ENCODE measurements at regions of chr3 and their contacts with region 1.

Region 1: GRCh38 chr3:133443649-133444422 is 44.0 kb downstream of the BFSP2 start:
- DNase-seq: peak; percentile 91
- ATAC-seq: peak; percentile 90
- H3K4me3 ChIP-seq: no peak overlapping the region
- H3K27ac ChIP-seq: peak overlapping the region; percentile 66
- H3K4me1 ChIP-seq: peaks cover 15% of the 10 kb centered on the region
- H3K27me3 ChIP-seq: no peaks in the 10 kb centered on the region
- CTCF ChIP-seq: peak; percentile 26; the same call in 1 of the 2 replicates

Region 2: GRCh38 chr3:133457465-133458067 is 13.7 kb after region 1 on chr3:
- CTCF ChIA-PET with region 1: no interaction called
- POLR2A ChIA-PET with region 1: no interaction called
- intact Hi-C with region 1: loop called (anchors 1 kb)
- DNase-seq: peak; percentile 33
- ATAC-seq: no peak
- H3K4me3 ChIP-seq: no peak overlapping the region
- H3K27ac ChIP-seq: no peak overlapping the region
- H3K4me1 ChIP-seq: peaks cover 20% of the 10 kb centered on the region
- H3K27me3 ChIP-seq: no peaks in the 10 kb centered on the region
- CTCF ChIP-seq: peak; percentile 54; the same call in 1 of the 2 replicates

Region 3: DNA sequence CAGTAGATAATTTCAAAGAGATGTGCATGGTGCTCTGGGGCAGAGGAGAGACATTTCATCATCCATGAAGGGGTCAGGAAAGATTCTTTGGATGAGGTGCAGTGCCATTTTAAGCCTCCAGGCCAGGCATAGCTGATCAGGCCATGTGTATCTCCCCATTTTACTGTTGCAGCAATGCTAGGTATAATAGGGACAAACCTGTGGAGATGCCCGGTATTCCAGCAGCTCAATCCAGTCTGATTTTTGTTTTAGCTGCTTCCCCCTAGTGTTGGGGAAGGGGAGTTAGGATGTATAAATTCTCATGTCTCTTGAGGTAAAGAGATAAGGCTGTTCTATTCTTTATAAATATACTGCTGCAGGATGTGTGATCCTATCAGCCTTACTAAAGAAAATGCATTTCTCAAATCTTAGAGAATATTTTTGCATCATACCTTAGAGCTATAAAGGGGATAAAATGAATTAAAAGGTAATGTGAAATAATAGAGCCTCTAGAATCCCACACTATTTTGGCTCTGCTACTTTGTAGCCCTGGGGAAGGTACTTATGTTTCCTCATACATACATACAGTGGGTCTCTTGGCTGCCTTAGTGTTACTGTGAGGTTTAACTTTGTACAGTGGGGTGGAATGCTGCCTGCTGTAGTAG is 134.8 kb after region 1 on chr3:
- CTCF ChIA-PET with region 1: no interaction called
- POLR2A ChIA-PET with region 1: no interaction called
- intact Hi-C with region 1: loop called (anchors 1 kb)
- DNase-seq: peak; percentile 63
- ATAC-seq: peak; percentile 53
- H3K4me3 ChIP-seq: peak overlapping the region; percentile 19; the same call in 1 of the 2 replicates
- H3K27ac ChIP-seq: no peak overlapping the region
- H3K4me1 ChIP-seq: peaks cover 19% of the 10 kb centered on the region
- H3K27me3 ChIP-seq: no peaks in the 10 kb centered on the region
- CTCF ChIP-seq: peak; percentile 70

Region 4: DNA sequence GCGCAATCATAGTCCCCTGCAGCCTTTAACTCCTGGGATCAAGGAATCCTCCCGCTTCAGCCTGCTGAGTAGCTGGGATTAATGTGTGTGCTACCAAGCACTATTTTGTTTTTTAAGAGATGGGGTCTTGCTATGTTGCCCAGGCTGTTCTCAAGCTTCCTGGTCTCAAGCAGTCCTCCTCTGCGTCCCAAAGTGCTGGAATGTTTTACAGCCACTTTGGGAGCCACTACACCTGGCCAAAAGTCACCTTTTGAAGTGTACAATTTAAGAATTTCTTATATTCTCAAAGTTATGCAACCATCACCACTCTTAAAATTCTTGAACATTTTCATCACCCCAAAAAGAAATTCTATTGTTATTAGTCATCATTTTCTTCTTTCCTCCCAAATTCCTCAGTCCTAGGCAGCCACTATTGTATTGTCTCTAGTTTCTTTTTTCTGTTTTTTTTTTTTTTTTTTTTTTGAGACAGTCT is 147.5 kb after region 1 on chr3:
- CTCF ChIA-PET with region 1: no interaction called
- POLR2A ChIA-PET with region 1: no interaction called
- intact Hi-C with region 1: loop called (anchors 5 kb)
- DNase-seq: peak; percentile 77
- ATAC-seq: peak; percentile 58
- H3K4me3 ChIP-seq: no peak overlapping the region
- H3K27ac ChIP-seq: no peak overlapping the region
- H3K4me1 ChIP-seq: peaks cover 35% of the 10 kb centered on the region
- H3K27me3 ChIP-seq: no peaks in the 10 kb centered on the region
- CTCF ChIP-seq: no peak

Region 5: GRCh38 chr3:133805527-133806475 is 362.0 kb after region 1 on chr3 and contains the start of gene SRPRB:
- CTCF ChIA-PET with region 1: no interaction called
- POLR2A ChIA-PET with region 1: no interaction called
- intact Hi-C with region 1: loop called (anchors 2 kb)
- DNase-seq: peak; percentile 93
- ATAC-seq: peak; percentile 98
- H3K4me3 ChIP-seq: peak within 1 kb of the TSS; percentile 93
- H3K27ac ChIP-seq: peak within 1 kb of the TSS; percentile 47
- H3K4me1 ChIP-seq: peaks cover 10% of the 10 kb centered on the region
- H3K27me3 ChIP-seq: no peaks in the 10 kb centered on the region
- CTCF ChIP-seq: no peak
- total RNA-seq, gene SRPRB: 41.1 and 43.4 TPM in 2 replicates